Gastrocnemius medialis (tissue), 4 donors: ENCODE measurements at regions of chr2 and their contacts with region 1.

Region 1: DNA sequence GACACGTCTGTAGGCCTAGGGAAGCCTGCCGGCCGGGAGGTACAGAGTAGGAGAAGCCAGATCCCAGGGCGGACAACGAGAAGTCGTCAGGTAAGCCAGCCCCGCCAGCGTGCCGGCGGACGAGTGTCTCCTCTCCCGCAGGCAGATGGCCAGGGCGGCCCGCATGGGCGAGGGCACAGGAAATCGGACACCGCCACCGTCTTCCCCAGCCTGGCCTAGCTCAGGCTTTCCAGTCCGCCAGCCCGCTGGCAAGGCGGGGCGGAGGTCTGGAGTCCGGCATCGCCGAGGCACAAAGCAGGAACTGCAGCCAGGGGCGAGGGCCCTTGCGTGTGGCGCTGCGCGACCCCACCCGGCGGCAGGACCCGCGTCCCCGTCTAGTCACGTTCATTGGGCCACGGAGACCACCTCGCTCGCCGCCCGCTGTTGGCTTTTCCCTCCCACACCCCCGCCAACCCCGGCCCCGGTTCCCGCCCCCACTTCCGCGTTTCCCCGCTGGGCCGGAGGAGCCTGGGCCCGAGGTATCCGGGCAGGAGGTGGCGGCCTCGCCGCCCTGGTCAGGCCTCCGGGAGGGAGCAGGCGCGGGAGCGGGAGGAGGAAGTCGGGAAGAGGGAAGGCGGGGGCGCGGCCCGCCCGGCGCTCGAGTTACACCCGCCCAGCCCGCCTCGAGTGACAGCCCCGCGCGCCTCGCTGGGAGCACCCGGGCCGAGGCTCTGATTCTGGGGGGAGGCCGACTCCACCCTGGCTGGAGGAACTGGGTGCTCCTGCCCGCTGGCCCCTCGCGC is at the start of gene GPD2:
- DNase-seq: peak; percentile 88 to 95
- ATAC-seq: peak; percentile 72
- H3K4me3 ChIP-seq: peak within 1 kb of the TSS; percentile 78 to 85 (median 82)
- H3K27ac ChIP-seq: peak within 1 kb of the TSS; percentile 98 to 99 (median 98)
- H3K4me1 ChIP-seq: peaks cover 49 to 51% of the 10 kb centered on the region in 2 donors
- H3K27me3 ChIP-seq: no peaks in the 10 kb centered on the region
- CTCF ChIP-seq: peak in 2 of 5 experiments; percentile 19 to 26
- POLR2A ChIP-seq: peak; percentile 80 to 91
- total RNA-seq, gene GPD2: 39.2 to 69.7 (median 64.1) TPM

Region 2: GRCh38 chr2:156385242-156385641 is 50.7 kb before region 1 on chr2:
- in situ Hi-C with region 1: no loop called
- intact Hi-C with region 1: no loop called
- DNase-seq: no peak
- ATAC-seq: no peak
- H3K4me3 ChIP-seq: no peak overlapping the region
- H3K27ac ChIP-seq: no peak overlapping the region
- H3K4me1 ChIP-seq: no peaks in the 10 kb centered on the region
- H3K27me3 ChIP-seq: no peaks in the 10 kb centered on the region
- CTCF ChIP-seq: no peak
- POLR2A ChIP-seq: no peak

Region 3: DNA sequence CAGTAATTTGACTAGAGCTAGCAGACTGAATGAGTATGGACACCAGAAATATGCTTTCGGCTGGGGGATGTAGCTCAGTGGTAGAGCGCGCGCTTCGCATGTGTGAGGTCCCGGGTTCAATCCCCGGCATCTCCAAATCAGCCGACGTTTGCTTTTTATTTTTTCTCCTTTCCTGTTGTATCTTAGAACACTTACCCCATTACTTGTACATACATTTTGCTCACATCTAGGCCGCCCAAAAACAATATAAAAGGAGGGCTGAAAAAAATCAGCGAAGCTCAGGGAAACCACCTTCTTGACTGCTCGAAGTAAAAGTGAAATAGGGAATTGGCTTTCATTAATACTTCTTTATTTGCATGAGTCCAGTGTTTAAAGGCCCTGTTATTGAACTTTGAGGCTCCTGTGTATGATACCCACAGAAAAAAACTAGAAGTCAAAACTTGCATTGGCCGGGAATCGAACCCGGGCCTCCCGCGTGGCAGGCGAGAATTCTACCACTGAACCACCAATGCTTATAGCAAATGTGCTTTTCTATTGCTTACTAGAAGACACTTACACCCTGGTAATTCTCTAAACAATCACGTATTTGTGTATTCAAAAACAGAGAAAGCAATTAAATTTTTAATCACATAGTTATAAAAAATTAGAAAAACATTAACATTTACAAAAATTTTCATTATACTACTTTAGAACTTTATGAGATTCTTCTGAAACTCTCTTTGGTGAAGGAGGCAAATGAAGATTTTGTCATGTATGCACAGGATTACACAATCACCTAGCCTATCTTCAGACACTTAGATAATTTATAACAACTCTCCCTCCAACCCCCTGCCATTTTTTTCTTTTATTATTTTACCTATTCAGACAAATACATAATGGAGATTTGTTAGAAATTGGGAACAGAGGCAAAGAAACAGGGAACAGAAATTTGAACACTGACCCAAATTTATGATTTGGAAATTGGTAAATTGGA is 34.9 kb before region 1 on chr2:
- in situ Hi-C with region 1: no loop called
- intact Hi-C with region 1: loop called (anchors 1 kb)
- DNase-seq: peak; percentile 39 to 44
- ATAC-seq: peak; percentile 71 to 86
- H3K4me3 ChIP-seq: peak overlapping the region; percentile 60 to 73 (median 69)
- H3K27ac ChIP-seq: peak overlapping the region; percentile 88 to 98 (median 92)
- H3K4me1 ChIP-seq: peaks cover 6 to 11% of the 10 kb centered on the region in 2 donors
- H3K27me3 ChIP-seq: no peaks in the 10 kb centered on the region
- CTCF ChIP-seq: no peak
- POLR2A ChIP-seq: no peak

Region 4: GRCh38 chr2:156491176-156491575 is 55.3 kb after region 1 on chr2:
- in situ Hi-C with region 1: no loop called
- intact Hi-C with region 1: no loop called
- DNase-seq: no peak
- ATAC-seq: no peak
- H3K4me3 ChIP-seq: no peak overlapping the region
- H3K27ac ChIP-seq: no peak overlapping the region
- H3K4me1 ChIP-seq: peaks cover under 1 to 5% of the 10 kb centered on the region in 2 donors
- H3K27me3 ChIP-seq: no peaks in the 10 kb centered on the region
- CTCF ChIP-seq: no peak
- POLR2A ChIP-seq: no peak